Activated CD4-positive, alpha-beta T cell treated with anti-CD3 and anti-CD28 coated beads for 36 hours (primary cell): ENCODE measurements at regions of chr3 and their contacts with region 1.

Region 1: GRCh38 chr3:135895106-135895733 is 70.3 kb upstream of the PPP2R3A start:
- DNase-seq: peak; percentile 73
- ATAC-seq: no peak
- H3K4me3 Mint-ChIP-seq: no peak overlapping the region
- H3K27ac Mint-ChIP-seq: no peak overlapping the region
- H3K4me1 Mint-ChIP-seq: no peaks in the 10 kb centered on the region
- H3K27me3 Mint-ChIP-seq: peaks cover 6% of the 10 kb centered on the region

Region 2: GRCh38 chr3:135736740-135737139 is 158.5 kb before region 1 on chr3:
- CTCF ChIA-PET with region 1: interaction called, 5 read pairs
- POLR2A ChIA-PET with region 1: no interaction called
- intact Hi-C with region 1: loop called in 1 of 2 experiments (anchors 2 kb)
- DNase-seq: peak; percentile 32
- ATAC-seq: no peak
- H3K4me3 Mint-ChIP-seq: no peak overlapping the region
- H3K27ac Mint-ChIP-seq: no peak overlapping the region
- H3K4me1 Mint-ChIP-seq: no peaks in the 10 kb centered on the region
- H3K27me3 Mint-ChIP-seq: peaks cover 4% of the 10 kb centered on the region